ENCODE measurements at regions of chr12 and their contacts with region 1.

Region 1: GRCh38 chr12:127494961-127495915 is 771.7 kb upstream of the TMEM132C start:
- DNase-seq: no peak
- H3K4me3 ChIP-seq: no peak overlapping the region
- H3K27ac ChIP-seq: no peak overlapping the region
- H3K4me1 ChIP-seq: no peaks in the 10 kb centered on the region
- H3K27me3 ChIP-seq: peaks cover 12% of the 10 kb centered on the region
- CTCF ChIP-seq: no peak

Region 2: GRCh38 chr12:127165567-127166392 is 329.5 kb before region 1 on chr12:
- CTCF ChIA-PET with region 1: no interaction called
- POLR2A ChIA-PET with region 1: no interaction called
- intact Hi-C with region 1: no loop called
- DNase-seq: peak; percentile 48
- H3K4me3 ChIP-seq: no peak overlapping the region
- H3K27ac ChIP-seq: no peak overlapping the region
- H3K4me1 ChIP-seq: no peaks in the 10 kb centered on the region
- H3K27me3 ChIP-seq: no peaks in the 10 kb centered on the region
- CTCF ChIP-seq: no peak

Region 3: GRCh38 chr12:127401005-127401404 is 94.2 kb before region 1 on chr12:
- CTCF ChIA-PET with region 1: interaction called, 10 read pairs
- POLR2A ChIA-PET with region 1: no interaction called
- intact Hi-C with region 1: no loop called
- DNase-seq: peak; percentile 20
- H3K4me3 ChIP-seq: no peak overlapping the region
- H3K27ac ChIP-seq: no peak overlapping the region
- H3K4me1 ChIP-seq: no peaks in the 10 kb centered on the region
- H3K27me3 ChIP-seq: no peaks in the 10 kb centered on the region
- CTCF ChIP-seq: no peak

Region 4: DNA sequence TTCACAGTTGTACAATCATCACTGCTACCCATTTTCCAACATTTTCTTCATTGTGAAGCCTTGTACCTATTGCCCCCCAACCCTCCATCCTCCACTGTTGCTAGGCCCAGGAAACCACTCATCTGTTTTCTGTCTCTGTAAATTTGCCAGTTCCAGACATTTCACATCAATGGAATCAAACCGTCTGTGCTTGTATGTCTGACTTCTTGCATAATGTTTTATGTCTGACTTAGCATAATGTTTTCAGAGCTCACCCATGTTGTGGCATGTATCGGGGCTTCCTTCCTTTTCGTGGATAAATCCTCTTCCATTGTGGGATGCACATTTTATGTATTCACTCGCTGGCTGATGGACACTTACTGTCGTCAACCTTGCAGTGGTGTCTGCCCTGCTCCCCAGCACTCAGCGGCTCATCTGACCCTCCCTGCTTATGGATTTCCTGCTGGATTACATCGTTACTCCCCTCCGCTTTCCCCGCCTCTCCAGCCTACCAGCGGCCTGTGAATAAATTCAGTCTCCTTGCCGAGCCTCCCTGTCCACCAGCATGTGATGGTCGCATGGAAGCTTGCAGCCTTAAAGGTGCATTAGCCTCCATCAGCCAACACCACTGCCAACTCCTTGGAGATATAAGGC is 44.1 kb after region 1 on chr12:
- CTCF ChIA-PET with region 1: no interaction called
- POLR2A ChIA-PET with region 1: no interaction called
- intact Hi-C with region 1: no loop called
- DNase-seq: no peak
- H3K4me3 ChIP-seq: no peak overlapping the region
- H3K27ac ChIP-seq: no peak overlapping the region
- H3K4me1 ChIP-seq: no peaks in the 10 kb centered on the region
- H3K27me3 ChIP-seq: no peaks in the 10 kb centered on the region
- CTCF ChIP-seq: no peak